ENCODE measurements at regions of chr4 and their contacts with region 1.

Region 1: GRCh38 chr4:55012363-55013230 is 112.8 kb downstream of the KDR start:
- DNase-seq: no peak
- H3K4me3 ChIP-seq: no peak overlapping the region
- H3K27ac ChIP-seq: no peak overlapping the region
- H3K4me1 ChIP-seq: peaks cover 9% of the 10 kb centered on the region
- H3K27me3 ChIP-seq: no peaks in the 10 kb centered on the region
- CTCF ChIP-seq: no peak

Region 2: GRCh38 chr4:54855191-54855854 is 157.3 kb before region 1 on chr4:
- CTCF ChIA-PET with region 1: no interaction called
- POLR2A ChIA-PET with region 1: no interaction called
- intact Hi-C with region 1: no loop called
- DNase-seq: no peak
- H3K4me3 ChIP-seq: no peak overlapping the region
- H3K27ac ChIP-seq: no peak overlapping the region
- H3K4me1 ChIP-seq: no peaks in the 10 kb centered on the region
- H3K27me3 ChIP-seq: no peaks in the 10 kb centered on the region
- CTCF ChIP-seq: no peak

Region 3: GRCh38 chr4:54945838-54946237 is 66.8 kb before region 1 on chr4:
- CTCF ChIA-PET with region 1: no interaction called
- POLR2A ChIA-PET with region 1: no interaction called
- intact Hi-C with region 1: no loop called
- DNase-seq: no peak
- H3K4me3 ChIP-seq: no peak overlapping the region
- H3K27ac ChIP-seq: no peak overlapping the region
- H3K4me1 ChIP-seq: no peaks in the 10 kb centered on the region
- H3K27me3 ChIP-seq: no peaks in the 10 kb centered on the region
- CTCF ChIP-seq: no peak

Region 4: GRCh38 chr4:55032788-55033187 is 20.2 kb after region 1 on chr4:
- CTCF ChIA-PET with region 1: no interaction called
- POLR2A ChIA-PET with region 1: no interaction called
- intact Hi-C with region 1: loop called (anchors 2 kb)
- DNase-seq: peak; percentile 2 to 41
- H3K4me3 ChIP-seq: peak overlapping the region; percentile 29; the same call in 1 of the 2 replicates
- H3K27ac ChIP-seq: peak overlapping the region; percentile 88
- H3K4me1 ChIP-seq: peaks cover 32% of the 10 kb centered on the region
- H3K27me3 ChIP-seq: no peaks in the 10 kb centered on the region
- CTCF ChIP-seq: no peak